Ovary (tissue), 10 donors: ENCODE measurements at regions of chr3 and their contacts with region 1.

Region 1: DNA sequence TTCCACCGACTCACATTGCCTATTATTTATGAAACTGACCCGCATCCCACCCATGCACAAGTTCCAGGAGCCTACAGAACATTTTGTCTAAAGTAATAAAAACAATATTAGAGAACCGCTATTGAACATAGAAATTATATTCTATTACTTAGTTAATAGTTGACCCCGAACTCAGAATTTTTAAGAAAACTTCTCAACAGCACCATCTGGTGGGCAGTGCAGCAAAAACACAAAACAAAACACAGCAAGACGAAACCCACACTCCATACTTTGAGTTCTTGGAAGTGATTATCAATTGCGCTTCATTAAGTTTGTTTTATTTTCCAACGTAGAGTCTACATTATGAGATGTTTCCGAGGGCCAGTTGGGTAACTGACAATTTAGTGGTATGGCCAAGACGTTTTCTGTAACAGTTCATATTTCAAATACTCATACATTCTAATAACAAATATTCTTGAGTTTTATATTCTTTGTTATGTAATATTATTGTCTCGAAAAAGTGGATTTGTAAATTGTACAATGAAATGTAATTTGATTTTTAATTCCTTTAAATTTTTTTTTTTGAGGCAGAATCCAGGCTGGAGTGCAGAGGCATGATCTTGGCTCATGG is 24.0 kb upstream of the C3orf70 start:
- DNase-seq: peak in 4 of 5 donors; percentile 31 to 59 (median 43)
- H3K4me3 ChIP-seq: no peak overlapping the region
- H3K27ac ChIP-seq: no peak overlapping the region
- H3K4me1 ChIP-seq: no peaks in the 10 kb centered on the region
- H3K27me3 ChIP-seq: no peaks in the 10 kb centered on the region
- CTCF ChIP-seq: peak; percentile 36 to 69 (median 67)
- EP300 ChIP-seq: no peak
- POLR2A ChIP-seq: no peak

Region 2: DNA sequence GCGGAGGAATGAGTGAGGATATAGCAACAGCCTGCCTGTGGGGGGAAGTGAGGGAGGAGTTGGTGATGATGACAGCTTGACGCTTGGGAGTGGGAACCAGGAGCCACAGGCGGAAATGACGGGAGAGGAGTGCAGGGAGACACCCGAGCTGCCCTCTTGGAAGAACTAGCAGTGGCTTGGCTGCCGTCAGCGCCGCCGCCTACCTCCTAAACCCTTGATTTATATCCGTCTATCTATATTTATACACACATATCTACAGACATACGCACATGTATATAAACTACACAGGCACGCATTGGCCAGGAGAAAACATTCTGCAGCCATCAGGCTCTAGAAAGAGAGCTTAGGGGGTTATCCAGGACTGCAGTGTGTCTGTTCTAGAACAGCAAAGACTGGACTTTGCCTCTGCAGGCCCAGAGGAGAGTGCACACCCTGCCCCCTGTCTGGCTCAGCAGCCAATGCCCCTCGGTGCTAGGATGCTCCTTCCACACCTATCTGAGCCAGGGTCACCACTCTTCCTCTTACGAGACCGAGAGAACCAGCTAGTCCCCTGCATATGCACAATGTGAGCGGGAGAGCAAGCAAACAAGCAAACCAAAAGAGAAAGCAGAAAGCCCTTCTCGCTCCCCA is 419.7 kb before region 1 on chr3:
- intact Hi-C with region 1: loop called in 1 of 4 experiments (anchors 10 kb)
- DNase-seq: peak; percentile 53 to 73 (median 64)
- H3K4me3 ChIP-seq: no peak overlapping the region
- H3K27ac ChIP-seq: peak overlapping the region in 1 of 2 donors; percentile 29
- H3K4me1 ChIP-seq: peaks cover 10% of the 10 kb centered on the region
- H3K27me3 ChIP-seq: no peaks in the 10 kb centered on the region
- CTCF ChIP-seq: no peak
- EP300 ChIP-seq: no peak
- POLR2A ChIP-seq: no peak

Region 3: GRCh38 chr3:184874709-184875644 is 301.9 kb before region 1 on chr3:
- intact Hi-C with region 1: loop called in 3 of 4 experiments (anchors 5 to 10 kb)
- DNase-seq: no peak
- H3K4me3 ChIP-seq: no peak overlapping the region
- H3K27ac ChIP-seq: no peak overlapping the region
- H3K4me1 ChIP-seq: no peaks in the 10 kb centered on the region
- H3K27me3 ChIP-seq: no peaks in the 10 kb centered on the region
- CTCF ChIP-seq: peak in 2 of 3 donors; percentile 52 to 56
- EP300 ChIP-seq: no peak
- POLR2A ChIP-seq: no peak

Region 4: GRCh38 chr3:185070491-185071286 is 106.2 kb before region 1 on chr3:
- intact Hi-C with region 1: loop called in 1 of 4 experiments (anchors 10 kb)
- DNase-seq: no peak
- H3K4me3 ChIP-seq: no peak overlapping the region
- H3K27ac ChIP-seq: no peak overlapping the region
- H3K4me1 ChIP-seq: no peaks in the 10 kb centered on the region
- H3K27me3 ChIP-seq: no peaks in the 10 kb centered on the region
- CTCF ChIP-seq: no peak
- EP300 ChIP-seq: no peak
- POLR2A ChIP-seq: no peak

Region 5: GRCh38 chr3:185552358-185552877 is 375.6 kb after region 1 on chr3 and contains the start of gene LIPH:
- intact Hi-C with region 1: no loop called
- DNase-seq: no peak
- H3K4me3 ChIP-seq: peak within 1 kb of the TSS; percentile 7
- H3K27ac ChIP-seq: no peak within 1 kb of the TSS
- H3K4me1 ChIP-seq: no peaks in the 10 kb centered on the region
- H3K27me3 ChIP-seq: no peaks in the 10 kb centered on the region
- CTCF ChIP-seq: no peak
- EP300 ChIP-seq: no peak
- POLR2A ChIP-seq: no peak
- total RNA-seq, gene LIPH: 0.12 to 1.0 (median 0.61) TPM in 5 of 7 donors, not detected in the others